CD8-positive, alpha-beta memory T cell (primary cell): ENCODE measurements at regions of chr1 and their contacts with region 1.

Region 1: DNA sequence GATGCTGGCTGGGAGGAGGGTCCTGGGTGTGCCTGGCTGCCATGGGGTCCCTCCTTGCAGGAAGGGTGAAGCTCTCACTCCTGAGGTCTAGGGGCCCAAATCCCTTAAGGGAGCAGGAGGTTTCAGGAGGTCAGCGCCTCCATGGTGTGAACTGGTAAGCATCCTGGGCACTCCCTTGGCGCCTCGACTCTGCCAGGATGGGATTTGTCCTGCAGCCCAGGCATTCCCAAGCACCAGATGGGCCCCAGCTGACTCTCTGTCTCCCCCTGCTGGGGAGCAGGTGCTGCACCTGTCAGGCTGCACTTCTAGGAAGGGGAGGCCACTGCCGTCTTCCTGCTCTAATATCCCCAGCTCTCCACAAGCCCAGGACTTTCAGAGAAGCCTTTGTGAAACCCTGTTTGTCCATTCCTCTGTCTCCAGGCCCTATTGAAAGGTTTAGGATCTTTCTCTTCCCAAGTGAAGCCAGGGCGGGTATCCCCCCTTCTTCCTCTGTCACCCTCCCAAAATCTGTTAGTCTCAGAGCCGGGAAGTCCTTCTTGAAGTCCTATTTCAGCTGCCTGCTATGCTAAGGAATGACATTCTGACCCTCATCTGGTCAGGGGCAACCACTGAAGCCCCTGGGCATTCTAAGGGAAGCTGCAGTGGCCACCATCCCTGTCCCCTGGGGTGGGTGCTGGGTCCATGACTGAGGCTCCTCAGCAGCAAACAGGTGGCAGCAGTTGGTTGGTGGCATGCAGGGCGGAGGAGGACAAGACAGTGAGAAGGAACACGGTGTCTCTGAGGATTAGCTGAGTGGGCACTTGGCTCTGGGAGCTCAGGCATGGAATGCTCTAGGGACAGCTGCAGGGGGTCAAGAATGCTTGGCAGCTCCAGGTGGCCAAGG is 3.3 kb downstream of the MYBPH start:
- DNase-seq: peak in 3 of 5 donors; percentile 5 to 19 (median 8)
- H3K4me3 ChIP-seq: no peak overlapping the region
- H3K4me3 Mint-ChIP-seq: no peak overlapping the region
- H3K27ac ChIP-seq: no peak overlapping the region
- H3K27ac Mint-ChIP-seq: no peak overlapping the region
- H3K4me1 ChIP-seq: no peaks in the 10 kb centered on the region
- H3K4me1 Mint-ChIP-seq: no peaks in the 10 kb centered on the region
- H3K27me3 ChIP-seq: no peaks in the 10 kb centered on the region
- H3K27me3 Mint-ChIP-seq: peaks cover 5 to 14% of the 10 kb centered on the region in 2 donors

Region 2: GRCh38 chr1:203038891-203039608 is 133.3 kb before region 1 on chr1:
- CTCF ChIA-PET with region 1: interaction called, 15 read pairs
- POLR2A ChIA-PET with region 1: no interaction called
- DNase-seq: peak; percentile 15 to 73 (median 45)
- H3K4me3 ChIP-seq: no peak overlapping the region
- H3K4me3 Mint-ChIP-seq: no peak overlapping the region
- H3K27ac ChIP-seq: no peak overlapping the region
- H3K27ac Mint-ChIP-seq: no peak overlapping the region
- H3K4me1 ChIP-seq: no peaks in the 10 kb centered on the region
- H3K4me1 Mint-ChIP-seq: peaks cover 1 to 5% (median 5%) of the 10 kb centered on the region in 3 donors
- H3K27me3 ChIP-seq: no peaks in the 10 kb centered on the region
- H3K27me3 Mint-ChIP-seq: peaks cover 4 to 12% of the 10 kb centered on the region in 2 donors

Region 3: GRCh38 chr1:203202431-203203245 is 30.3 kb after region 1 on chr1:
- CTCF ChIA-PET with region 1: no interaction called
- POLR2A ChIA-PET with region 1: no interaction called
- DNase-seq: no peak
- H3K4me3 ChIP-seq: no peak overlapping the region
- H3K4me3 Mint-ChIP-seq: no peak overlapping the region
- H3K27ac ChIP-seq: no peak overlapping the region
- H3K27ac Mint-ChIP-seq: no peak overlapping the region
- H3K4me1 ChIP-seq: no peaks in the 10 kb centered on the region
- H3K4me1 Mint-ChIP-seq: no peaks in the 10 kb centered on the region
- H3K27me3 ChIP-seq: no peaks in the 10 kb centered on the region
- H3K27me3 Mint-ChIP-seq: peaks cover 9 to 38% of the 10 kb centered on the region in 2 donors